ENCODE measurements at regions of chr12 and their contacts with region 1.

Region 1: DNA sequence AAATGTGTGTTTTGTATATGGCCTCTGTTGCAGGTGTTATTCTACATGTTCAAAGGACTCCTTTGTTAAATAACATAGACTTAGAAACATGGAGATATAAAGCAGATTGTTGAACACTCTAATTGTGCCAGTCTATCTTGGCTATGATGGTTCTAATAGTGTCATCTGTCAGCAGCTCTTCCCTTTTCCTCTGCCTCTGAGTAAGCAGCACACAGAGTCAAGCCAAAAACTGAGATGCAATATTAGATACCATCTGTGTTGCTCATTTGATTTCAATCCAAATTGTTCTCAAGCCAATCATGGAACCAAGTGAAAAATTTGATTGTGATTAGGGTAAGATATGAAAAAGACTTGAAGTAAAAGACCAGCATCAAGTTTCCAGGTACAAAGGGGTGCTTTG is 871.1 kb upstream of the MGAT4C start:
- DNase-seq: no peak
- H3K4me3 ChIP-seq: no peak overlapping the region
- H3K27ac ChIP-seq: no peak overlapping the region
- H3K4me1 ChIP-seq: no peaks in the 10 kb centered on the region
- H3K27me3 ChIP-seq: no peaks in the 10 kb centered on the region
- CTCF ChIP-seq: no peak
- POLR2A ChIP-seq: no peak

Region 2: GRCh38 chr12:87086121-87086891 is 41.0 kb before region 1 on chr12:
- intact Hi-C with region 1: no loop called
- DNase-seq: no peak
- H3K4me3 ChIP-seq: no peak overlapping the region
- H3K27ac ChIP-seq: no peak overlapping the region
- H3K4me1 ChIP-seq: no peaks in the 10 kb centered on the region
- H3K27me3 ChIP-seq: no peaks in the 10 kb centered on the region
- CTCF ChIP-seq: no peak
- POLR2A ChIP-seq: no peak

Region 3: DNA sequence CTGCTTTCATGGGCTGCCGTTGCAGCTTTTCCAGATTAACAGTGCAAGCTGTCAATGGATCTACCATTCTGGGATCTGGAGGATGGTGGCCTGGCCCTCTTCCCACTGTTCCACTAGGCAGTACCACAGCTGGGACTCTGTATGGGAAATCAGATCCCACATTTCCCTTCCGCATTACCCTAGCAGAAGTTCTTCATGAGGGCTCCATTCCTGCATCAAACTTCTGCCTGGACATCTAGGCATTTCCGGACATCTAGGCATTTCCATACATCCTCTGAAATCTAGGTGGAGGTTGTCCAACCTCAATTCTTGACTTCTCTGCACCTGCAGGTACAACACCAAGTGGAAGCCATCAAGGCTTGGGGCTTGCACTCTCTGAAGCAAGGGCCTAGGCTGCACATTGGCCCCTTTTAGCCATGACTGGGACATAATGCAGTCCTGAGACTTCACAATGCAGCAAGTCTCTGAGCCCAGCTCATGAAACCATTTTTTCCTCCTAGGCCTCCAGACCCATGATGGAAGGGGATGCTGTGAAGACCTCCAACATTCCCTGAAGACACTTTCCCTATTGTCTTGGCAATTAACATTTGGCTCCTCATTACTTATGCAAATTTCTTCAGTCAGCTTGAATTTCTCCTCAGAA is 38.6 kb after region 1 on chr12:
- intact Hi-C with region 1: loop called (anchors 2 kb)
- DNase-seq: no peak
- H3K4me3 ChIP-seq: no peak overlapping the region
- H3K27ac ChIP-seq: no peak overlapping the region
- H3K4me1 ChIP-seq: no peaks in the 10 kb centered on the region
- H3K27me3 ChIP-seq: no peaks in the 10 kb centered on the region
- CTCF ChIP-seq: no peak
- POLR2A ChIP-seq: no peak

Region 4: GRCh38 chr12:88035271-88035906 is 908.1 kb after region 1 on chr12:
- intact Hi-C with region 1: no loop called
- DNase-seq: peak; percentile 80 to 83
- H3K4me3 ChIP-seq: peak overlapping the region; percentile 55 to 91 (median 76)
- H3K27ac ChIP-seq: peak overlapping the region; percentile 62 to 81
- H3K4me1 ChIP-seq: no peaks in the 10 kb centered on the region
- H3K27me3 ChIP-seq: no peaks in the 10 kb centered on the region
- CTCF ChIP-seq: no peak
- POLR2A ChIP-seq: peak; percentile 36

Measured in breast epithelium (tissue), 4 donors.